Activated naive CD4-positive, alpha-beta T cell treated with anti-CD3 and anti-CD28 coated beads for 36 hours (primary cell): ENCODE measurements at regions of chr19 and their contacts with region 1.

Region 1: GRCh38 chr19:49224856-49225255 is 67.3 kb downstream of the TRPM4 start:
- DNase-seq: peak; percentile 70
- H3K4me3 Mint-ChIP-seq: no peak overlapping the region
- H3K27ac Mint-ChIP-seq: no peak overlapping the region
- H3K4me1 Mint-ChIP-seq: peaks cover 4% of the 10 kb centered on the region
- H3K27me3 Mint-ChIP-seq: peaks cover 4% of the 10 kb centered on the region

Region 2: GRCh38 chr19:48999481-49000325 is 225.2 kb before region 1 on chr19:
- CTCF ChIA-PET with region 1: interaction called, 3 read pairs
- intact Hi-C with region 1: loop called (anchors 5 kb)
- DNase-seq: peak; percentile 76
- H3K4me3 Mint-ChIP-seq: no peak overlapping the region
- H3K27ac Mint-ChIP-seq: no peak overlapping the region
- H3K4me1 Mint-ChIP-seq: peaks cover 22% of the 10 kb centered on the region
- H3K27me3 Mint-ChIP-seq: no peaks in the 10 kb centered on the region

Region 3: GRCh38 chr19:49073514-49074378 is 151.1 kb before region 1 on chr19:
- CTCF ChIA-PET with region 1: no interaction called
- intact Hi-C with region 1: loop called (anchors 10 kb)
- DNase-seq: peak; percentile 26
- H3K4me3 Mint-ChIP-seq: no peak overlapping the region
- H3K27ac Mint-ChIP-seq: no peak overlapping the region
- H3K4me1 Mint-ChIP-seq: peaks cover 9% of the 10 kb centered on the region
- H3K27me3 Mint-ChIP-seq: peaks cover 43% of the 10 kb centered on the region

Region 4: GRCh38 chr19:49301165-49301865 is 76.5 kb after region 1 on chr19:
- CTCF ChIA-PET with region 1: interaction called, 10 read pairs
- intact Hi-C with region 1: loop called (anchors 1 kb)
- DNase-seq: peak; percentile 90
- H3K4me3 Mint-ChIP-seq: peak overlapping the region; percentile 50
- H3K27ac Mint-ChIP-seq: no peak overlapping the region
- H3K4me1 Mint-ChIP-seq: peaks cover 2% of the 10 kb centered on the region
- H3K27me3 Mint-ChIP-seq: no peaks in the 10 kb centered on the region

Region 5: GRCh38 chr19:49443366-49444099 is 218.7 kb after region 1 on chr19:
- CTCF ChIA-PET with region 1: no interaction called
- intact Hi-C with region 1: loop called (anchors 1 kb)
- DNase-seq: peak; percentile 96
- H3K4me3 Mint-ChIP-seq: peak overlapping the region; percentile 75
- H3K27ac Mint-ChIP-seq: peak overlapping the region; percentile 72
- H3K4me1 Mint-ChIP-seq: peaks cover 23% of the 10 kb centered on the region
- H3K27me3 Mint-ChIP-seq: peaks cover 38% of the 10 kb centered on the region

Region 6: GRCh38 chr19:49468746-49469447 is 244.0 kb after region 1 on chr19:
- CTCF ChIA-PET with region 1: no interaction called
- intact Hi-C with region 1: loop called (anchors 1 kb)
- DNase-seq: peak; percentile 90
- H3K4me3 Mint-ChIP-seq: peak overlapping the region; percentile 43
- H3K27ac Mint-ChIP-seq: peak overlapping the region; percentile 96
- H3K4me1 Mint-ChIP-seq: peaks cover 48% of the 10 kb centered on the region
- H3K27me3 Mint-ChIP-seq: no peaks in the 10 kb centered on the region